ENCODE measurements at regions of chr14 and their contacts with region 1.

Region 1: DNA sequence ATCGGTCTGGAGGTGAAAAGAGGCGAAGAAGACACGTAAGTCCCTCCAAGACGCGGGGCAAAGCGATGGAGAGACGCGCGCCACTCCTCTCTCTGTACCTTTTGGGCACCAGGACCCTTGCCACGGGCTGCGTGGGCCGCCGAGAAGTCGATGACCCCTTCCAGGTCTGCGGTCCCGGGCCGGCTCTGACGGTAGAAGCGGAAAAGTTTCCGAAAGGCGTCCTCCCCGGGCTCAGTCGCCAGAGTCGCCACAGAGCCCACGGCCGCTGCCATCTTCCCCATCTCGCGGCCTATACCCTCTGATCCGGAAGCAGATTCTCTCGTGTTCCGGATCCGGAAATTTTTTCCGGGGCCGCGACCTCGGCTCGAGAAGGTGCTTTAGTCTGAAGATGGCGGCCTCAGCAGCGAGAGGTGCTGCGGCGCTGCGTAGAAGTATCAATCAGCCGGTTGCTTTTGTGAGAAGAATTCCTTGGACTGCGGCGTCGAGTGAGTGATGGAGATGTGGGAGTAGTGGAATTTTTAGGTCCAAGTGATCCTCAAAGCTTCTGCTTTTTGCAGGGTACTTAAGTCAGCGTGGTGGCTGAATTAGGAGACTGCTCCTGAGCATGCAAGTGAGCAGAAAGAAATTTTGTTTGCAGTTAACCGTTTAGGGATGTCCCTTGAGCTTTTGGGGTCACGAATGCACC is at the starts of genes ALKBH1 and SLIRP:
- DNase-seq: peak; percentile 80 to 85 (median 82)
- H3K4me3 ChIP-seq: peak within 1 kb of the TSS; percentile 98 to 100 (median 98)
- H3K4me3 Mint-ChIP-seq: peak within 1 kb of the TSS; percentile 92 to 97
- H3K27ac ChIP-seq: peak within 1 kb of the TSS; percentile 64 to 83
- H3K27ac Mint-ChIP-seq: peak within 1 kb of the TSS; percentile 62 to 97 (median 90)
- H3K4me1 ChIP-seq: peaks cover 23 to 32% of the 10 kb centered on the region in 2 donors
- H3K4me1 Mint-ChIP-seq: peaks cover 28% of the 10 kb centered on the region
- H3K27me3 ChIP-seq: no peaks in the 10 kb centered on the region
- H3K27me3 Mint-ChIP-seq: no peaks in the 10 kb centered on the region
- CTCF ChIP-seq: no peak
- polyA plus RNA-seq, gene ALKBH1: 3.4 to 4.5 (median 4.2) TPM
- polyA plus RNA-seq, gene SLIRP: 89.3 to 402 (median 323) TPM

Region 2: GRCh38 chr14:77457522-77458290 is 250.2 kb before region 1 on chr14 and contains the starts of genes AHSA1 and VIPAS39:
- intact Hi-C with region 1: loop called in 1 of 2 experiments (anchors 5 kb)
- DNase-seq: peak; percentile 96 to 98 (median 97)
- H3K4me3 ChIP-seq: peak within 1 kb of the TSS; percentile 80 to 92 (median 87)
- H3K4me3 Mint-ChIP-seq: peak within 1 kb of the TSS; percentile 100
- H3K27ac ChIP-seq: peak within 1 kb of the TSS; percentile 66 to 85
- H3K27ac Mint-ChIP-seq: peak within 1 kb of the TSS; percentile 96 to 100 (median 99)
- H3K4me1 ChIP-seq: peaks cover 19 to 31% of the 10 kb centered on the region in 2 donors
- H3K4me1 Mint-ChIP-seq: peaks cover 25% of the 10 kb centered on the region
- H3K27me3 ChIP-seq: no peaks in the 10 kb centered on the region
- H3K27me3 Mint-ChIP-seq: no peaks in the 10 kb centered on the region
- CTCF ChIP-seq: no peak
- polyA plus RNA-seq, gene AHSA1: 59.5 to 72.5 (median 71.5) TPM
- polyA plus RNA-seq, gene VIPAS39: 8.1 to 17.8 (median 10.8) TPM

Region 3: GRCh38 chr14:77603654-77604255 is 104.1 kb before region 1 on chr14:
- intact Hi-C with region 1: loop called in 1 of 2 experiments (anchors 10 kb)
- DNase-seq: peak in 2 of 3 donors; percentile 52 to 53
- H3K4me3 ChIP-seq: no peak overlapping the region
- H3K4me3 Mint-ChIP-seq: peak overlapping the region in 1 of 2 donors; percentile 52
- H3K27ac ChIP-seq: peak overlapping the region in 1 of 2 donors; percentile 42
- H3K27ac Mint-ChIP-seq: peak overlapping the region; percentile 37 to 78 (median 53)
- H3K4me1 ChIP-seq: peaks cover 48 to 60% of the 10 kb centered on the region in 2 donors
- H3K4me1 Mint-ChIP-seq: peaks cover 87% of the 10 kb centered on the region
- H3K27me3 ChIP-seq: no peaks in the 10 kb centered on the region
- H3K27me3 Mint-ChIP-seq: no peaks in the 10 kb centered on the region
- CTCF ChIP-seq: peak; percentile 36

Region 4: GRCh38 chr14:77659831-77660230 is 48.0 kb before region 1 on chr14:
- intact Hi-C with region 1: loop called (anchors 5 kb)
- DNase-seq: peak; percentile 75 to 94 (median 89)
- H3K4me3 ChIP-seq: peak overlapping the region; percentile 0 to 52 (median 34)
- H3K4me3 Mint-ChIP-seq: peak overlapping the region; percentile 68 to 72
- H3K27ac ChIP-seq: peak overlapping the region; percentile 87 to 96
- H3K27ac Mint-ChIP-seq: peak overlapping the region; percentile 88 to 98 (median 97)
- H3K4me1 ChIP-seq: peaks cover 55 to 66% of the 10 kb centered on the region in 2 donors
- H3K4me1 Mint-ChIP-seq: peaks cover 64% of the 10 kb centered on the region
- H3K27me3 ChIP-seq: no peaks in the 10 kb centered on the region
- H3K27me3 Mint-ChIP-seq: no peaks in the 10 kb centered on the region
- CTCF ChIP-seq: no peak

Region 5: DNA sequence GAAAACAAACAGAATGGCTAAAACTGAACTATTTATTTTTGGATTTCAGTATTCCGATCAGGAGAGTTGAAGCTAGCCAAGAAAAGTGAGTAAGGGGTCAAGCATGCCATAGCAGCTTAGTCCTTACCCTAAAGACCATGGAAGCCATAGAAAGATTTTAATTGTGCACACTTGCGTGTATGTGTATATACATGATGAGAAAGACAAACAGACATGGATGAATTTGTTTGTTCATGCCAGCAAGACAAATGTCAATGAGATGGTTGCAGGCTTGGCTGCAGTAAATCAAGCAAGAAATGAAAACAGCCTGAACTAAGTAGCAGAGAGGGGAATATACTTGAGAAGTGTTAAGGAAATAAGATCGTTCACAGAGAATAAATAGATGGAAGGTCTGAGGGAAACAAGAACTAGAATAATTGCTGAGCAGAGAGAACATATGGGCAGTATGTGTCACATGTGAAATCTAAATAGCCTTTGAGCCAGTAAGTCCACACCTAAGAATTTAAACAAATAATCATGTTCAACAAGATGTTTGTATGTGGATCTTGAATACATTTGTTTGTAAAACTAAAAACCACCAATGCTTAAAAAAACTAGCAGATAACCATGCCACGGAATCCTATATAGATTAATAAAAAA is 38.3 kb after region 1 on chr14:
- intact Hi-C with region 1: no loop called
- DNase-seq: no peak
- H3K4me3 ChIP-seq: no peak overlapping the region
- H3K4me3 Mint-ChIP-seq: no peak overlapping the region
- H3K27ac ChIP-seq: no peak overlapping the region
- H3K27ac Mint-ChIP-seq: no peak overlapping the region
- H3K4me1 ChIP-seq: no peaks in the 10 kb centered on the region
- H3K4me1 Mint-ChIP-seq: no peaks in the 10 kb centered on the region
- H3K27me3 ChIP-seq: no peaks in the 10 kb centered on the region
- H3K27me3 Mint-ChIP-seq: no peaks in the 10 kb centered on the region
- CTCF ChIP-seq: no peak